ENCODE measurements at regions of chr13 and their contacts with region 1.

Region 1: DNA sequence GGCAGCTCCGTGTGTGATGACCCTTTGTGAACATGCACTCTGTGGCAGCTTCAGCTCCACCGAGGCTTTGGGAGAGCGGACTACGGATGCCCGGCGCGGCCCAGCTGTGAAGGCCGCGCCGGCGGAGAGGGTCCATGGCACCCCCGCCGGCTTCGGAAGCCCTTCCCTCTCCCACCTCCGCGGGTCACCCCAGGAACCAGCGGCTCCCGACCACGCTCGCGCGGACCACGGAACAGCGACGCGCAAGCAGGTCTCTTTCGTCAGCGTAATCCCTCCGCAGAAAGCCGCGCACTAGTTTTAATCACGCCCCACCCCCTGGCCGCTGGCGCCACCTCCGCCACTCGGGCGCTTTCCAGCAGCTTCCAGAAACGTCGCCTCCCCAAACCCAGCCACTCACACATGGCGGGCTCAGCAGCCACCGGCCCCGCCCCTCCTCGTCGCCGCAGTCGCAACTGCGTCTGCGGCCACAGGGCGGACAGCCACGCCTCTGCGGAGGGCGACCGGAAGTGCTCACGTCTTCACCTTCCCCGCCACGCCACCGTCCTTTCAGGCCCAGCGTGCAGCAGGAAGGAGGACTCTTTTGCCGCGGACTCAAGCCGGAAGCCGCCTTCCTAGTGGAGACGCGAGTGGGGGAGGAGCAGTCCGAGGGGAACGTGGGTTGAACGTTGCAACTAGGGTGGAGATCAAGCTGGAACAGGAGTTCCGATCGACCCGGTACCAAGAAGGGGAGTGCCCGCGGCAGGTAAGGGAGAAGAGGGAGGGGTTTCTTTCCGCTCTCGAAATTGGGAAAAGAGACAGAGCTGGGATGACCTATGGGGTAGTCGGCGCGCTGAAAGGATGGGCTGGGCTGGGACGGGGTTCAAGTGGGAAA is at the start of gene USPL1:
- DNase-seq: peak; percentile 99
- H3K4me3 ChIP-seq: peak within 1 kb of the TSS; percentile 86 to 94 (median 88)
- H3K27ac ChIP-seq: peak within 1 kb of the TSS; percentile 98 to 100 (median 100)
- H3K4me1 ChIP-seq: peaks cover 0 to 40% (median 24%) of the 10 kb centered on the region in 4 donors
- H3K27me3 ChIP-seq: no peaks in the 10 kb centered on the region
- CTCF ChIP-seq: peak in 2 of 4 experiments; percentile 16 to 38
- EP300 ChIP-seq: peak in 3 of 4 donors; percentile 37 to 93 (median 69)
- POLR2A ChIP-seq: peak; percentile 91 to 93
- total RNA-seq, gene USPL1: 17.4 to 34.6 (median 23.7) TPM

Region 2: DNA sequence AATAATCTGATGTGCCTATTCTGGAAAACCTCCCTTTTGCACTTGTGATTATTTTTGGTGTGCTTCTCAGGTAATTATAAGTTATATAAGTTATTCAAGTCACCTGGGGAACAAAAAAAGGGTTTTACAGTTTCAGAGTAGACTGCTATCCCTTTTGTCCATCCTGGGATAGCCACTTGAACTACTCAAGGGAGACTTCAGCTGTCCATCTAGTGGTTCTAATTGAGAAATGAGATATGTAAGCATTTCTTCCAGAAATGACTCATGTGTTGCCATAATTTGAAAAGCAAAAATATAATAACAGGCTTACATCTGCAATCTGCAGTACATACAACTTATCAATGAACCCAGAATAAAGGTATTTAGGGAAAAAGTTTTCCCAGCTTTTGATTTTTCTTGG is 787.5 kb before region 1 on chr13:
- intact Hi-C with region 1: no loop called
- DNase-seq: no peak
- H3K4me3 ChIP-seq: no peak overlapping the region
- H3K27ac ChIP-seq: no peak overlapping the region
- H3K4me1 ChIP-seq: peaks cover 0 to 15% (median 2%) of the 10 kb centered on the region in 4 donors
- H3K27me3 ChIP-seq: no peaks in the 10 kb centered on the region
- CTCF ChIP-seq: no peak
- EP300 ChIP-seq: no peak
- POLR2A ChIP-seq: no peak

Region 3: DNA sequence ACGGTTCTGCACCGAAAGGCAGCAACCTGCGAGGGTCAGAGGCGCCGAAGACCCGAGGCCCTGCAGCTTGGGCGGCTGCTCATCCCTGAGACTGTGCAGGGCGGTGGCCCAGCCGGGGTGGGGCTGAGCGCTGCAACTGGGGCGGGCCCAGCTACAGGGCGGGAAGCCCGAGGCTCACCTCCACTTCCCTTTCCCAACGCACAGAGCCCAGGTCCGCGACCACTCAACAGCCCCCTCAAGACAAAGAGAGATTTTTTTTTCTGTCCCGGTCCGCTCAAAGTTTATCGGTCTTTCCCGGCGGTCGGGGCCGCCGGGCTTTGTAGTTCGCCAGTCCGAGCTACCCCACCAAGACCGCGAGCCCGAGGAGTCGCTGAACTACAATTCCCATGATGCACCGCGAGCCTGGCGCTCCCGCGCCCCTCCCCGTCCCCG is 310.8 kb before region 1 on chr13:
- intact Hi-C with region 1: loop called (anchors 1 kb)
- DNase-seq: peak; percentile 97
- H3K4me3 ChIP-seq: peak overlapping the region; percentile 60 to 87 (median 82)
- H3K27ac ChIP-seq: peak overlapping the region; percentile 89 to 95 (median 94)
- H3K4me1 ChIP-seq: peaks cover 0 to 57% (median 38%) of the 10 kb centered on the region in 4 donors
- H3K27me3 ChIP-seq: no peaks in the 10 kb centered on the region
- CTCF ChIP-seq: no peak
- EP300 ChIP-seq: no peak
- POLR2A ChIP-seq: no peak

Region 4: GRCh38 chr13:30572859-30573275 is 44.7 kb before region 1 on chr13:
- intact Hi-C with region 1: loop called (anchors 5 kb)
- DNase-seq: no peak
- H3K4me3 ChIP-seq: peak overlapping the region; percentile 18 to 46 (median 38)
- H3K27ac ChIP-seq: peak overlapping the region; percentile 50 to 70 (median 66)
- H3K4me1 ChIP-seq: peaks cover 0 to 46% (median 26%) of the 10 kb centered on the region in 4 donors
- H3K27me3 ChIP-seq: no peaks in the 10 kb centered on the region
- CTCF ChIP-seq: no peak
- EP300 ChIP-seq: no peak
- POLR2A ChIP-seq: no peak

Region 5: DNA sequence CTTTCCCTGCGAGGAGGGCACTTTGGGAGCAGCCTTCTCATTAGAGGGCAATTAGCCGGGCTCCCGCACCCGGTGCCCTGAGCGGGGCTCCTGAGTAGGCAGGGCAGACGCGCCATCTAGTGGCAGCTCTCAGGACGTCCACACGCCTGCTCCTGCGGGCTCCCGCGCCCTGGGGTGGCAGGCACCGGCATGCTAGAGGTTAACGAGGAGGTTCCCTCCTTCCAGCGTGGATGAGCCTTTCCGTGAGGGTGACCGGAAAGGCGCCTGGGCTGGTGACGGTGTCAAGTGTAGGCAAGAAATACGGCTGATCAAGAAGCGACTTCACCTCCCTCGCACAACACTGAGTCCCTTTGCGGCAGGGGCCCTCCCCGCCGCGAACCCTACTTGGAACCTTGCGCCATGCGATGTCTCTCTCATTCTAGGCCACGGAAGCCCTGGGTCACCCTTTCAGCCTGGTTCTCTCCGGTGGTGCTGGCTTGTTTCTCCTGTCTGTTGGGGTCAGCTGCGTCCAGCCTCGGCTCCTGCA is 185.5 kb after region 1 on chr13:
- intact Hi-C with region 1: loop called (anchors 2 kb)
- DNase-seq: peak; percentile 93
- H3K4me3 ChIP-seq: peak overlapping the region; percentile 17 to 50 (median 46)
- H3K27ac ChIP-seq: peak overlapping the region; percentile 36 to 76 (median 64)
- H3K4me1 ChIP-seq: peaks cover 0 to 30% (median 13%) of the 10 kb centered on the region in 4 donors
- H3K27me3 ChIP-seq: no peaks in the 10 kb centered on the region
- CTCF ChIP-seq: peak; percentile 87 to 94 (median 91)
- EP300 ChIP-seq: peak in 1 of 4 donors; percentile 3
- POLR2A ChIP-seq: no peak

Region 6: DNA sequence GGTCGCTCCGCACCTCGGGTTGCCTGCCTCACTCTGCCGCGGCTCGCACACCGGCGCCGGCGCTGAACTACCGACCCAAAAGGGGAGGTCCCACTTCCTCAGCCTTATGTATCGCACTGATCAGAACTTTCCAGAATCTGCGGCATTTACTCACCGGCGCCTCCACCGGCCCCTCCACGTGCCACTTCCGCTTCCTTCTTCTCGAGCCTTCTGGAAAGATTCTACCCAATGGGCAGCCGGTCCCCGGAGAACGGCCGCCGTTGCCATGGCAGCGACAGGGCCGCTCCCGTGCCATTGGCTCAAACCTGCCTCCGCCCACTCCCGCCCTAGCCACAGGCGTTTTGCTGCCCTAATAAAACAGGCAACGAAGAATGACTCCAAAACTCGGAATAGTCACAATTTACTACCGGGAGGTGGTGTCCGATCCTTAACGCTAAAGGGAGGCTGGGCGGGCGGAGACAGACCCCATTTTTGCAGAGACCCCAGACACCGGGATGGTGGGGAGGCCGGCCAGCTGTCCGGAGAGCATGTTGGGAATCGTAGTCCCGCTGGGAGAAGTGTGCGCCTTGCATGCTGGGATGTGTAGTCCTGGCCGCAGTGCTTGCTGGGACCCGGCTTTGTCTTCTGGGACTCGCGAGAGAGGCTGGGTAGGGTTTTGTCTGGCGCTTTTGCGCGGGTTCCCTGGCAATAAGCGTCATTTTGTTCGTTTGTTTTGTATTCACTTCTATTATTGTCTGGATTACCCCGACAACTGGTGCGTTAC is 544.5 kb after region 1 on chr13 and contains the start of gene HSPH1:
- intact Hi-C with region 1: loop called (anchors 5 kb)
- DNase-seq: peak; percentile 99
- H3K4me3 ChIP-seq: peak within 1 kb of the TSS; percentile 66 to 92 (median 75)
- H3K27ac ChIP-seq: peak within 1 kb of the TSS; percentile 84 to 98 (median 90)
- H3K4me1 ChIP-seq: peaks cover 0 to 20% (median 18%) of the 10 kb centered on the region in 4 donors
- H3K27me3 ChIP-seq: no peaks in the 10 kb centered on the region
- CTCF ChIP-seq: peak in 1 of 4 experiments; percentile 10
- EP300 ChIP-seq: peak in 1 of 4 donors; percentile 80
- POLR2A ChIP-seq: peak; percentile 18 to 57
- total RNA-seq, gene HSPH1: 30.7 to 41.5 (median 33.7) TPM

Measured in sigmoid colon (tissue), 7 donors.